ENCODE measurements at regions of chr11 and their contacts with region 1.

Region 1: GRCh38 chr11:65652511-65653231 is 10.0 kb downstream of the RELA start:
- DNase-seq: peak; percentile 97
- ATAC-seq: peak; percentile 94

Region 2: DNA sequence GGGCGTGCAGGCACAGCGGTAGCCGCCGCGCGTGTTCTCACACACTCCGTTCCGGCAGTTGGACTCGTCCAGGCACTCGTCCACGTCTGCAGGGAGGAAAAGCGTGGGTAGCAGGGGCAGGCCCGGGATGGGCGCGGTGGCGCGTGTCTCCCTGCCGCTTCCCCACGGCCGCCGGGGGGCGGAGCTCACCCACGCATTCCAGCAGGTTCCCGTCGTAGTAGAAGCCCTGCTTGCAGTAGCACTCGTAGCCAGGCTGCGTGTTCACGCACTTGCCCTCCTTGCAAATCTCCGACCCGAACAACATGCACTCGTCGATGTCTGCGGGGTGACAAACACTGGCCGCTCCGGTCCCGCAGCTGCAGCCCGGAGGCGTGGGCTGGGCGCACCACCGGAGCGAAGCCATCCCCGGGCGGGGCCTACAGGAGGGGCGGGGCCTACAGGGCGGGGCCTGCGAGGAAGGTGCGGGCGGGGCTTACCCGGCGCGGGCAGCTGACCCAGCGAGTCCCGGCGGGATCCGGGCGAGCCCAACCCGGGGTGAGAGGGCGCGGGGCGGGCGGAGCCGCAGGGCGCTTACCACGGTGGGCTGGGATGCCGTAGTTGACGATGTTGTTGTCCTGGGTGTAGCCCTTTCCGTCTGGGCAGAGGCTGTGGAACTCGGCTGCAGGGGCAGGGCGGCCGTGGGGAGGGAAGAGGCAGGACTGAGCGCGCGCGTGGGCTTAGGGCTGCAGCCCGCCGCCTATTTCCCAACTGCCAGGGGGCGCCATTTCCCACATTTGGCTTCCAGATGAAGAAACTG is 112.2 kb before region 1 on chr11:
- intact Hi-C with region 1: no loop called
- DNase-seq: peak; percentile 97
- ATAC-seq: peak; percentile 94

Region 3: DNA sequence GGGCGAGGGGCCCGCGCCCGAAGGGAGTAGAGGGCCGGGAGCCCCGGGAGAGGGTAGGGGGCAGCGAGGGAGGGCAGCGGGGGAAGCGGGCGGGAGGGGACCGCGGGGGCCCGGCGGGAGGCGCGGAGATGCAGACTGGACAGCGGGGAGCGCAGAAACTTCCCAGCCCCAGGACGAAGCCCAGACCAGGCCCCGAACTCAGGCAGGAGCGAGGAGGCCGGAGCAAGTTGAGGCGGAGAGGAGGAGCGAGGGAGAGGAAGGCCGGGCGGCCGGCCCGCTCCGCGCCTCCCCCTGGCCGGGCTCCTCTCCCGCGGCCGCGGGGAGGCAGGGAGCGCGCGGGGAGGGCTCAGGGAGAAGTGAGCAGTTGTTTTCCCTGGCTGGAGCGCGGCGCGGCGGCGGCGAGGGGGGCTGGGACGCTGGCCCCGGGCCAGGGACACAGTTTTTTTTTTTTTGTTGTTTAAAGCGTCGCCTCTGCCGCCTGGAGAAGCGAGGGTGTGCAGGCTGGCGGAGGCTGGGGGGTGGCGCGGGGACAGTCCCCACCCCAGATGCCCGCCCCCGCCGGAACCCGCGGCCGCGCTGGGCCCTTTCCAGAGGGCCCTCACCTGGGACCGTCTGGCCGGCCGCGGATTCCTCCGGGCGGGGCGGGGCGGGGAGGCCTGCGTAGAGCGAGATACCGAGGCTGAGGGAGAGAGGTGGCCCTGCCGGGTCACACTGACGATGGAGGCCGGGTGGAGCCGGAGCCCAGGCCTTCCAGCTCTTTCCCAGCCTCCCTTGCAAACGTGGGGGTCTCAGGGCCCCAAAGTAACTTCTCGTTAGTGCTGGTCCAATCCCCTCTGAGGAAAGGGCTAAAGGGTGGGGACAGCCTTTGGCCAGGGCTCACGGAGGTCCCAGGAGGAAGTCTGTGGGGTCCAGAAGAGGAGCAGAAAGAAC is 94.4 kb before region 1 on chr11 and contains the start of gene LTBP3:
- intact Hi-C with region 1: no loop called
- DNase-seq: peak; percentile 92
- ATAC-seq: peak; percentile 90
- total RNA-seq, gene LTBP3: 72.3 TPM

Region 4: DNA sequence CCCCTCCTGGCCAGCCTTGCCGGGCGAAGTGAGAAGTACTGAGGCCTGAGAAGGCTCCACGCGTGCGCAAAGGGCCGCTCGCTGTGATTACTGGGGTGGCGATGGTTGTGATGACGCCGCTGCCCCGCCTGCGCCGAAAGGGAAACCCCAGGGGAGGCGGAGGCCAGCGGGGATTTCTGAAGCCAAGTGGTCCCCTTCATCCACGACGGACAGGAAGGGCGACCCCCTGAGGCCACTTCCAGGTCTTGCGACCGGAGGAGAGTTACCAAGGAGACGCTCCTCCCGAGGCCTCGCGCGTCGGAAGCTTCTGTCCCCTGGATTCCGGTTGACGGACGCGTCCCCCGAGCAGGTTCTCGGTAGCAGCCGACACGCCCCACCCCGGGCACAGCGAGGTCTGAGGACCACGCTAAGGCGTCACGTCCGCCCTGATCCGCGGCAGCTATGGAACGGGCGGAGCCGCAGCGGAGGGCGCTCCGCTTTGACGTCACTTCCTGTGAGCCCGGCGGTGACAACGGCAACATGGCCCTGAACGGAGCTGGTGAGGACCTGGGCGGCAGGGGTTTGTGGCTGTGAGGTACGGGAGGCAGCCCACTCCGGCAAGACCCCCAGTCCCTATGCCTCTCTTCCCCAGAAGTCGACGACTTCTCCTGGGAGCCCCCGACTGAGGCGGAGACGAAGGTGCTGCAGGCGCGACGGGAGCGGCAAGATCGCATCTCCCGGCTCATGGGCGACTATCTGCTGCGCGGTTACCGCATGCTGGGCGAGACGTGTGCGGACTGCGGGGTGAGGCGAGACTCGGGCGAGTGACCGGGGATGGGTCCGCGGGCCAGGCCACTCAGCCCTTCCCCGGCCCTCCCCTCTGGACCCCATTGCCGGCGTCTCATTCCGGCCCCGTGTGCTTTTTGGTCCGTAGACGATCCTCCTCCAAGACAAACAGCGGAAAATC is 82.4 kb before region 1 on chr11 and contains the start of gene ZNRD2:
- intact Hi-C with region 1: loop called (anchors 5 kb)
- DNase-seq: peak; percentile 99
- ATAC-seq: peak; percentile 90
- total RNA-seq, gene ZNRD2: 23.3 TPM

Measured in Right ventricle myocardium inferior (tissue), 1 donor.